Activated CD4-positive, alpha-beta T cell treated with anti-CD3 and anti-CD28 coated beads, Interleukin-2, amount 10 ng/mL, durations not matched to agents 24 days and 14 days (primary cell): ENCODE measurements at regions of chr3 and their contacts with region 1.

Region 1: GRCh38 chr3:112327371-112327951 is 5.5 kb upstream of the CD200 start:
- DNase-seq: peak; percentile 87
- H3K4me3 Mint-ChIP-seq: no peak overlapping the region
- H3K27ac Mint-ChIP-seq: no peak overlapping the region
- H3K4me1 Mint-ChIP-seq: peaks cover 5% of the 10 kb centered on the region
- H3K27me3 Mint-ChIP-seq: peaks cover 8% of the 10 kb centered on the region

Region 2: GRCh38 chr3:112111785-112112402 is 215.6 kb before region 1 on chr3:
- intact Hi-C with region 1: loop called (anchors 2 kb)
- DNase-seq: peak; percentile 89
- H3K4me3 Mint-ChIP-seq: no peak overlapping the region
- H3K27ac Mint-ChIP-seq: peak overlapping the region; percentile 6
- H3K4me1 Mint-ChIP-seq: peaks cover 21% of the 10 kb centered on the region
- H3K27me3 Mint-ChIP-seq: no peaks in the 10 kb centered on the region

Region 3: DNA sequence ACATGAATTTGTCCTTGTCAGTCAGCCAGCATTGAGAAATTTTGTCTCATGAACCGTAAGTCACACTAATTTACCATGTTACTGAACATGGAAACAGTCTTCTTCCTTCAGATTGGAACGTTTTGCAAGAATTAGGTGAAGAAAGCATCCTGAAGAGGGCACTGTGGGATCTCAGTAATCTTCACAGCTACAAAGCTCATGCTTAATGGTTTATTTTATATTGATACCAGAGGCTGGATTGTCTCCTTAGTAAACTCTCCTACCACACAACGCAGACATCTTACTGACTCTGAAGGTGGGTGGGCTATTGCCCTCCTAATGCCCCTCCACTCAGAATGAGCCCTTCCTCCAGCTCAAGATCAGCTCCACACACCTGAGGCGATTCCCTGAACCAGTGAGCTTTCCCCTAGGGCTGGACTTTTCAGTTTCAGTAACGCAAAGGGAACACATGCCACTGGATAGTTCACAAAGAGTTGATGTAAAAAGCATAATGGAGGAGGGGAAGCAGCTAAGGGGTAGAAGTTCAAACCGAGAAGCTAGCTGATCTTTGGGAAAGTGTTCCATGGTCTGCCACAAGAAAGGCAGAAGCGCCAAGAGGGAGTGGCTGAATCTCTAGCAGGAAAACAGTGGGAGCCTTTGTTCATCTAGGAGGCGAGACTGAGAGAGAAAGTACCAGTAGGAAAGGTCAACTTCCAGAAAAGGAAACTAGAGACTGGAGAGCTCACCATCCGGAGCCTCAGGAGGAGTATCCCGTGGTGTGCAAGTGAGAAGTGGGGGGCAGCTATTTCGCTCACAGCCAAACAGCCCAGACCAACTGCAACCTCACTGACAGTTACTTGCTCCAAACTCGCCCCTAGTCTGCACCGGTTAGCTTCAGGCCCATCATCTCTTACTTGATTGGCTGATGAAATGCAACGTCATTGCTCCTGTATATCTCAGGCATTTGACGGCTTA is 33.8 kb before region 1 on chr3 and contains the start of gene SLC9C1:
- intact Hi-C with region 1: loop called (anchors 5 kb)
- DNase-seq: peak; percentile 87
- H3K4me3 Mint-ChIP-seq: peak within 1 kb of the TSS; percentile 76
- H3K27ac Mint-ChIP-seq: peak within 1 kb of the TSS; percentile 60
- H3K4me1 Mint-ChIP-seq: peaks cover 26% of the 10 kb centered on the region
- H3K27me3 Mint-ChIP-seq: no peaks in the 10 kb centered on the region
- total RNA-seq, gene SLC9C1: not detected in 2 replicates

Region 4: DNA sequence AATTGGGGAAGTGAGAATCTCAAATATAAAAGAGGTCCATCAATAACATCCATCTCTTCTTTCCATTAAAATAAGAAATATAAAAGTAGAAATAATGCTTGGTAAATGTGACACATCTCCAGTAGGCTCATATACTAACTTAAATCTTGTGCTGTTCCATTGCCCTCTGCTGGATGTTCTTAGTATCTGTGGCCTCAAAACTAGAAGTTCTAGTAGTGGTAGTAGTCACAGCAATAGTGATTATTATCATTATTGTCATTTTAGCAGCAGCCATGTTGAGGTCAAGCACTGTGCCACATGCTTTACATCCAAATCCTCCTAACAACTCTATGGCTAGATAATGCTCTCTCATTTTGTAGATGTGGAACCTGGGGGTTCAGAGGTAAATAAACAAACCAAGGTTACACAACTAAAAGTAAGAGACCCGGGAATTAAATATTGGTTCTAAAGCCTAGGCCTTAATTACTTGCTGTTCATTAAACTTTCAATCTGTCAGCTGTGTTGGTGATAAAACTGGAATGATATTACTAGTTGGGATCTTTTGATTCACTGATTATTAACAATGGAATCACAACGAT is 192.1 kb after region 1 on chr3:
- intact Hi-C with region 1: loop called (anchors 1 kb)
- DNase-seq: peak; percentile 83
- H3K4me3 Mint-ChIP-seq: no peak overlapping the region
- H3K27ac Mint-ChIP-seq: no peak overlapping the region
- H3K4me1 Mint-ChIP-seq: peaks cover 20% of the 10 kb centered on the region
- H3K27me3 Mint-ChIP-seq: no peaks in the 10 kb centered on the region

Region 5: GRCh38 chr3:112531358-112531781 is 203.9 kb after region 1 on chr3:
- intact Hi-C with region 1: loop called (anchors 1 kb)
- DNase-seq: no peak
- H3K4me3 Mint-ChIP-seq: no peak overlapping the region
- H3K27ac Mint-ChIP-seq: no peak overlapping the region
- H3K4me1 Mint-ChIP-seq: peaks cover 1% of the 10 kb centered on the region
- H3K27me3 Mint-ChIP-seq: no peaks in the 10 kb centered on the region